Gastrocnemius medialis (tissue), 4 donors: ENCODE measurements at regions of chr10 and their contacts with region 1.

Region 1: GRCh38 chr10:11757821-11758463 is 15.8 kb downstream of the ECHDC3 start:
- DNase-seq: peak; percentile 79 to 87
- ATAC-seq: peak; percentile 57 to 81
- H3K4me3 ChIP-seq: no peak overlapping the region
- H3K27ac ChIP-seq: peak overlapping the region; percentile 71 to 92 (median 78)
- H3K4me1 ChIP-seq: peaks cover 44 to 46% of the 10 kb centered on the region in 2 donors
- H3K27me3 ChIP-seq: no peaks in the 10 kb centered on the region
- CTCF ChIP-seq: peak; percentile 86 to 94 (median 92)
- POLR2A ChIP-seq: no peak

Region 2: GRCh38 chr10:11515596-11516430 is 242.1 kb before region 1 on chr10:
- in situ Hi-C with region 1: loop called (anchors 5 to 10 kb)
- intact Hi-C with region 1: loop called (anchors 1 kb)
- DNase-seq: peak; percentile 4 to 31
- ATAC-seq: peak; percentile 87 to 88
- H3K4me3 ChIP-seq: no peak overlapping the region
- H3K27ac ChIP-seq: no peak overlapping the region
- H3K4me1 ChIP-seq: no peaks in the 10 kb centered on the region
- H3K27me3 ChIP-seq: no peaks in the 10 kb centered on the region
- CTCF ChIP-seq: peak; percentile 65 to 78 (median 73)
- POLR2A ChIP-seq: no peak

Region 3: DNA sequence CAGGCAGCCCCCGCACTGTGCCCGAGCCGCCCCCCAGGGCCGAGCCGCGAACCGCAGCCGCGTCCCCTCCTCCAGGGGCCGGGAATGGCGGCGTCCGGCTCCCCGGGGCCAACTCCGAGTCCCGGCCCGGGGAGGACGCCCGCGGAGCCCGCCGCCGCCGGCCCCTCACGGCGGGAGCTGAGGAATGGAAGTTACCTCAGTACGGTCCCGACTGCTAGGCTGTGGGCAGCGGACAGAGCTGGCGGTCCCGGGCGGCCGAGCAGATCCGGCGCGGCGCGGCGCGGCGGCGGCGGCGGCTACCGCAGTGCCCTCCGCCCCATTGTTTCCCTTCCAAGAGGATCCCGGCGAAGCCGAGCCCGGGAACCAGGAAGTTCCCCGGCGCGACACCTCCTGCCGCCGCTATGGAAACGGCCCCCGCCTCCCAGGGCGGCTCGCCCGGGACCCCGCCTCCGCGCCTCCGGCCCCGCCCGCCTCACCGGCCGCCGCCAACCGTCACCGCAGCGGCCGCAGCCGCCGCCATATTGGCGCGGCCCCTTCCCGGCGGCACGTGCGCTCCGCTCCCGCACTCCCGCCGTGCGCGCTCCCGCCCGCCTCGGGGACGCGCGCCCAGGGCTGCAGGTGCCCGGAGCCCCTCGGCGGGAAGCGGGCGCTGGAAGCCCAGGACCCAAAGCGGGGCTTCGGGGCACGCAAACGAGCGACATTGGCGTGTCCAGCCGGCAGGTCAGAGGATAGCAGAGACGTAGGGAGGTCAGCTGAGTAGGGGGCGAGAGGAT is 146.5 kb before region 1 on chr10 and contains the start of gene USP6NL:
- in situ Hi-C with region 1: no loop called
- intact Hi-C with region 1: loop called (anchors 1 kb)
- DNase-seq: peak; percentile 75 to 76
- ATAC-seq: peak; percentile 87 to 94
- H3K4me3 ChIP-seq: peak within 1 kb of the TSS; percentile 69 to 86 (median 80)
- H3K27ac ChIP-seq: peak within 1 kb of the TSS; percentile 71 to 82 (median 76)
- H3K4me1 ChIP-seq: peaks cover 9 to 11% of the 10 kb centered on the region in 2 donors
- H3K27me3 ChIP-seq: no peaks in the 10 kb centered on the region
- CTCF ChIP-seq: no peak
- POLR2A ChIP-seq: peak; percentile 26 to 60
- total RNA-seq, gene USP6NL: 5.6 to 6.2 (median 5.9) TPM

Region 4: GRCh38 chr10:11742005-11742778 is 15.8 kb before region 1 on chr10 and contains the start of gene ECHDC3:
- in situ Hi-C with region 1: no loop called
- intact Hi-C with region 1: loop called (anchors 1 kb)
- DNase-seq: peak; percentile 71 to 72
- ATAC-seq: peak; percentile 61 to 65
- H3K4me3 ChIP-seq: peak within 1 kb of the TSS; percentile 72 to 86 (median 78)
- H3K27ac ChIP-seq: peak within 1 kb of the TSS; percentile 93 to 96 (median 94)
- H3K4me1 ChIP-seq: peaks cover 28 to 34% of the 10 kb centered on the region in 2 donors
- H3K27me3 ChIP-seq: no peaks in the 10 kb centered on the region
- CTCF ChIP-seq: no peak
- POLR2A ChIP-seq: peak; percentile 83 to 86
- total RNA-seq, gene ECHDC3: 465 to 605 (median 490) TPM

Region 5: GRCh38 chr10:12195603-12196506 is 437.9 kb after region 1 on chr10 and contains the starts of genes CDC123 and NUDT5:
- in situ Hi-C with region 1: no loop called
- intact Hi-C with region 1: loop called (anchors 10 kb)
- DNase-seq: peak; percentile 82 to 86
- ATAC-seq: peak; percentile 96
- H3K4me3 ChIP-seq: peak within 1 kb of the TSS; percentile 72 to 96 (median 90)
- H3K27ac ChIP-seq: peak within 1 kb of the TSS; percentile 84 to 98 (median 94)
- H3K4me1 ChIP-seq: peaks cover 22 to 26% of the 10 kb centered on the region in 2 donors
- H3K27me3 ChIP-seq: no peaks in the 10 kb centered on the region
- CTCF ChIP-seq: no peak
- POLR2A ChIP-seq: peak in 1 of 2 donors; percentile 42
- total RNA-seq, gene CDC123: 31.0 to 54.3 (median 37.9) TPM
- total RNA-seq, gene NUDT5: 5.1 to 8.2 (median 5.6) TPM